ENCODE measurements at regions of chr4 and their contacts with region 1.

Region 1: DNA sequence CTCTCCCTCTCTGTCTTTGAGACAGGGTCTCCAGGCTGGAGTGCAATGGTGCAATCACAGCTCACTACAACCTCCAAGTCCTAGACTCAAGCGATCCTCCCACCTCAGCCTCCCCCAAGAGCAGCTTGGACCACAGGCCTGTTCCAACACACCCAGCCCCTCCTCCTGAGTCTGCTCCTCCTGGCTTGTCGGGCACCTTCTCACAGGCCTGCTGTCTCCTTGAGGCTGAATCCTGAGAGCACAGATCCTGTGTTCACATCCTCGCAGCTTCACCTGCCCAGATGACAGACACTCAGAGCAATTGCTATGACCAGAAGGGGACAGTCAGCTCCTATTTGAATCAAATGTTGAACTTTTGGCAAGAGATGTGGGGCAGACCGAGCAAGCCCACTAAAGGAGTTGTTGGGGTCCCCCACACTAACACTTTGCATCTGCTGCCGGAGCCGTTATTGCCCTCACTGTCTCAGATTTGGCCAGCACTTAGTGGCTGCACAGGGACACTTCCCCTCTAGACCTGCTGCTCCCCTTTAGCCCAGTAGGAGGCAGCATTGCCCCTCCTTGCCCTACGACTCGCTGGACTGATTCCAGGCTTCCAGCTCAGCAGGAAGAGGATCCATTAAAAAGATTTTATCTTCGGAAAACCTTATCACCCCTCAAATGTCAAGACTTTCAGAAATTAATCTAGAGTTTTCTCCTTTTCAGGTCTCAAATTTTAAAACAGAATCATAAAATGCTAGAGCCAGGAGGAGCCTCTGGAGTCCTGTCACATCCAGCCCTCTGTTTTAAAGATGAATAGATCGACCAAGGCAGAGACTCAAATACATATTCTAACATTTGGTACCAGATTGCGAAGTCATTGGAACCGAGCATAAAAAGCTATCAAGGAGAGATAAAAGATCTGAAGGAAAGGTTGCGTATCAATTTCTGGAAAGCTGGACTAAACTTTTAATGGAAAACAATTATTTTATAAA is 113.7 kb downstream of the USP46 start:
- DNase-seq: peak; percentile 75
- CTCF ChIP-seq: peak; percentile 92

Region 2: GRCh38 chr4:52579602-52580272 is 34.4 kb after region 1 on chr4:
- CTCF ChIA-PET with region 1: interaction called, 19 read pairs
- POLR2A ChIA-PET with region 1: no interaction called
- DNase-seq: no peak
- CTCF ChIP-seq: no peak

Region 3: DNA sequence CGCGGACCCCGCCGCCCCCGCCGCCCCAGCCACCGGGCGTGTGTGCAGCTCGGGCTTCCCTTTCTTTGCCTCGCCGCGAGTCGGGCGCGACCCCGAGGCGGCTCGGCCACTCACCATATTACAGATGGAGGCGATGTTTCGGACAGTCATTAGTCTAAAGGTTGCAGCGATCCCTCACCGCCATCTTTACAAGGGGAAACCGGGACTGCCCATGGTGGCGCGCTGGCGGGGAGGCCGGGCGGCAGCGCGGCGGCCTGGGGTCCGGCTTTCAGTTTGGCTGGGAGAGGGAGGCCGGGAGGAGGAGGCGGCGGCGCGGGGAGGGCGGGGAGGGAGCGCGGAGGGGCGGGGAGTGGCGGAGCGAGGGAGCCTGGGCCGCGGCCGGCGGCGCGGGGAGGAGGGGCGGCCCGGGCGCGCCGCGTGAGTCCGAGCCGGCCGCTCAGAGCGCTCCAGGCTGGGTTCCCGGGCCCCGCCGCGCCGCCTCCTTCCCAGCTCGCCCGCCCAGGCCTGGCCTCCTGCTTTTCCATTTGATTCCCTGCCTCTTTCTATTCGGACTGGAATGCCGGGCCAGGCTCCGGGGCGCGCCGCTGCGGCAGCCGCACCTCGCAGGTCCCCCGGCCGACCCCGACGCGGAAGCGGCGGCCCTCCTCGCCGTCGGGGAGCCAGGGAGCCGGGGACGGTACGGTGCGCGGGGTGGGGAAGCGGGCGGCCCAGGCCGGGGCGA is 113.8 kb after region 1 on chr4 and contains the start of gene USP46:
- CTCF ChIA-PET with region 1: interaction called, 35 read pairs
- POLR2A ChIA-PET with region 1: no interaction called
- DNase-seq: peak; percentile 92
- CTCF ChIP-seq: no peak

Region 4: GRCh38 chr4:52670739-52671138 is 125.4 kb after region 1 on chr4:
- CTCF ChIA-PET with region 1: interaction called, 35 read pairs
- POLR2A ChIA-PET with region 1: no interaction called
- DNase-seq: no peak
- CTCF ChIP-seq: no peak

Region 5: GRCh38 chr4:52721968-52722815 is 176.8 kb after region 1 on chr4:
- CTCF ChIA-PET with region 1: interaction called, 12 read pairs
- POLR2A ChIA-PET with region 1: no interaction called
- DNase-seq: peak; percentile 91
- CTCF ChIP-seq: no peak